ENCODE measurements at regions of chr16 and their contacts with region 1.

Region 1: GRCh38 chr16:74606521-74607310 is at the start of gene GLG1:
- DNase-seq: peak; percentile 89
- H3K4me3 Mint-ChIP-seq: peak within 1 kb of the TSS; percentile 92
- H3K27ac Mint-ChIP-seq: peak within 1 kb of the TSS; percentile 92
- H3K4me1 Mint-ChIP-seq: peaks cover 64% of the 10 kb centered on the region
- H3K27me3 Mint-ChIP-seq: no peaks in the 10 kb centered on the region
- total RNA-seq, gene GLG1: 66.5 and 71.8 TPM in 2 replicates

Region 2: DNA sequence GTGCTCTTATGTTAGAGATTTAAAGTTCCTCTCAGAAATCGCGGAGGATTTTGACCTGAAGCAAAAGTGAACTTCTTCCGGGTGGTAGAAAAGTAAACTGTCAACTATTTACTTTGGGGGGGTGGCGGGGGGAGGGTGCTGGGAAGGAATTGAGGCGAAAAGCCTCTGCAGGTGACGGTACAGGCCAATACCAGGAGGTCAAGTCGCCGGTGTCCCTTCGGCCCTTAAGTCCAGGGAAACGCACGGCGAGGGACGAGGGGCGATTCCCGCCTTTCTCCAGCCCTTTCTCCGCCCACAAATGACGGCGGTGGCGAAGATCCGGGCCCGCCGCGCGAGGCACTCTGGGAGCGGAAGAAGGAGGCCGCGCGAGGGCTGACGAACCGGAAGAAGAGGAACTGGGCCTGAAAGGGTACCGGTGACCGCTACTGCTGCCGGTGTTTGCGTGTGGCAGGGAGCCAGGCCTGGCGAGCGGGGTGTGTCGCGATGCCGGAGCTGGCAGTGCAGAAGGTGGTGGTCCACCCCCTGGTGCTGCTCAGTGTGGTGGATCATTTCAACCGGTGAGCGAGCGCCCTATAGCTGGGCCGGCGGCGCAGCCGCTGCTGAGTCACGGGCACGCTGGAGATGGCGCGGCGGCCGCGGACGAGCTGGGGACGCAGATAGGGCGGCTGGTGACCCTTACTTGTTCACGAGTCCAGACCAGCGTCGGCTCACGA is 310.1 kb before region 1 on chr16 and contains the start of gene PSMD7:
- intact Hi-C with region 1: loop called (anchors 1 kb)
- DNase-seq: peak; percentile 88
- H3K4me3 Mint-ChIP-seq: peak within 1 kb of the TSS; percentile 90
- H3K27ac Mint-ChIP-seq: peak within 1 kb of the TSS; percentile 93
- H3K4me1 Mint-ChIP-seq: peaks cover 27% of the 10 kb centered on the region
- H3K27me3 Mint-ChIP-seq: no peaks in the 10 kb centered on the region
- total RNA-seq, gene PSMD7: 168 and 175 TPM in 2 replicates

Region 3: GRCh38 chr16:74492976-74493375 is 113.7 kb before region 1 on chr16:
- intact Hi-C with region 1: loop called (anchors 5 kb)
- DNase-seq: no peak
- H3K4me3 Mint-ChIP-seq: no peak overlapping the region
- H3K27ac Mint-ChIP-seq: no peak overlapping the region
- H3K4me1 Mint-ChIP-seq: peaks cover 5% of the 10 kb centered on the region
- H3K27me3 Mint-ChIP-seq: no peaks in the 10 kb centered on the region

Region 4: GRCh38 chr16:74666425-74667254 is 59.9 kb after region 1 on chr16 and contains the start of gene RFWD3:
- intact Hi-C with region 1: loop called (anchors 1 kb)
- DNase-seq: peak; percentile 96
- H3K4me3 Mint-ChIP-seq: peak within 1 kb of the TSS; percentile 91
- H3K27ac Mint-ChIP-seq: peak within 1 kb of the TSS; percentile 96
- H3K4me1 Mint-ChIP-seq: peaks cover 43% of the 10 kb centered on the region
- H3K27me3 Mint-ChIP-seq: no peaks in the 10 kb centered on the region
- total RNA-seq, gene RFWD3: 112 and 116 TPM in 2 replicates

Region 5: DNA sequence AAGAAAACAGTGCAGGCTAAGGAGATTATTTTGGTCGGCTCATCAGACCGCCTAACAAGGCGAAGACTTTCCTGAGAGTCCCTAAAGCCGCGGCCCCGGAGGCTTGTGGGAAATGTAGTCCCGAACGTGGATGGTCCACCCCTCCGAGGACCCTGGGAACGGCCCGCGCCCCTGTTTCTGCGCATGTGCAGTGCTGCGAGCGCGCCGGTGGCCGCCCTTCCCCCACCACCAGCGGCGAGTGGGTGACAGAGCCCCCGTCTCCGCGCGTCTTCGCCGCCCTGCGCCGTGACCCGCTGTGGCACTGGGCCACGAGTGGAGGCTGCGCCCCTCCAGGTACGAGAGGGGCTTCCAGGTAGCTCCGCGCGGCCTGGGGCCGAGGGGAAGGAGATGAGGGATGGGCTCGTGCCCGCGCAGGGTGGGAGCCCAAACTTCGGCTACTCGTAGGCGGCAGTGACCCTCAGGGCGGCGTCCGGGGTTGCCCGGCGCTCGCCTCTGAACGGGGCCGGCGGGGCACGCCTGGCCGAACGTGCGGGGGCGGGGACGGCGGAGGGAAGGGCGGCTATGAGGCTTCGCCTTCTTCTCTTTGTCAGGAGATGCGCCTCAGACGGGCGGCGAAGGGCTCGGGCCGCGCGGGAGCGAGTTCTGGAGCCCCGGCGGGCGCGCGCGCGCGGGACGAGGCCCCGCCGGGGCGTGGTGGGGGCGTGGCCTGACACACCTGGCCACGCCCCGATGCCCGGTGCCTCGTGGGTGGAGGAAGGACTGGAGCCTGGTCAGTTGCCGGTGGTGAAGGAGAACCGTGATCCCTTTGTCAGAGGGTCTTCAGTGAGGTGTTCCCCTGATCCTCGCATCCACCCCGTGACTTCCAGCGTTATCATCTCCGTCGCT is 541.8 kb after region 1 on chr16 and contains the start of gene ZFP1:
- intact Hi-C with region 1: loop called (anchors 1 kb)
- DNase-seq: peak; percentile 90
- H3K4me3 Mint-ChIP-seq: peak within 1 kb of the TSS; percentile 90
- H3K27ac Mint-ChIP-seq: peak within 1 kb of the TSS; percentile 84
- H3K4me1 Mint-ChIP-seq: peaks cover 29% of the 10 kb centered on the region
- H3K27me3 Mint-ChIP-seq: no peaks in the 10 kb centered on the region
- total RNA-seq, gene ZFP1: 12.3 and 14.6 TPM in 2 replicates

Region 6: GRCh38 chr16:75566040-75566810 is 959.5 kb after region 1 on chr16 and contains the start of gene GABARAPL2:
- intact Hi-C with region 1: loop called (anchors 1 kb)
- DNase-seq: peak; percentile 87
- H3K4me3 Mint-ChIP-seq: peak within 1 kb of the TSS; percentile 99
- H3K27ac Mint-ChIP-seq: peak within 1 kb of the TSS; percentile 90
- H3K4me1 Mint-ChIP-seq: peaks cover 28% of the 10 kb centered on the region
- H3K27me3 Mint-ChIP-seq: peaks cover 5% of the 10 kb centered on the region
- total RNA-seq, gene GABARAPL2: 62.7 and 69.5 TPM in 2 replicates